H1 (cell line): ENCODE measurements at regions of chr10 and their contacts with region 1.

Region 1: GRCh38 chr10:86755740-86756510 is 494 bp upstream of the BMPR1A start:
- DNase-seq: peak; percentile 61 to 97
- H3K4me3 ChIP-seq: peak overlapping the region; percentile 84 to 96 (median 89)
- H3K27ac ChIP-seq: peak overlapping the region; percentile 88
- H3K4me1 ChIP-seq: peaks cover under 1 to 16% (median 8%) of the 10 kb centered on the region in 4 experiments
- H3K27me3 ChIP-seq: no peaks in the 10 kb centered on the region
- CTCF ChIP-seq: no peak
- EP300 ChIP-seq: no peak
- POLR2A ChIP-seq: peak in 1 of 2 experiments; percentile 87; a peak in 2 of 3 replicates
- RAD21 ChIP-seq: peak in 1 of 2 experiments; percentile 0; a peak in 1 of 4 replicates

Region 2: DNA sequence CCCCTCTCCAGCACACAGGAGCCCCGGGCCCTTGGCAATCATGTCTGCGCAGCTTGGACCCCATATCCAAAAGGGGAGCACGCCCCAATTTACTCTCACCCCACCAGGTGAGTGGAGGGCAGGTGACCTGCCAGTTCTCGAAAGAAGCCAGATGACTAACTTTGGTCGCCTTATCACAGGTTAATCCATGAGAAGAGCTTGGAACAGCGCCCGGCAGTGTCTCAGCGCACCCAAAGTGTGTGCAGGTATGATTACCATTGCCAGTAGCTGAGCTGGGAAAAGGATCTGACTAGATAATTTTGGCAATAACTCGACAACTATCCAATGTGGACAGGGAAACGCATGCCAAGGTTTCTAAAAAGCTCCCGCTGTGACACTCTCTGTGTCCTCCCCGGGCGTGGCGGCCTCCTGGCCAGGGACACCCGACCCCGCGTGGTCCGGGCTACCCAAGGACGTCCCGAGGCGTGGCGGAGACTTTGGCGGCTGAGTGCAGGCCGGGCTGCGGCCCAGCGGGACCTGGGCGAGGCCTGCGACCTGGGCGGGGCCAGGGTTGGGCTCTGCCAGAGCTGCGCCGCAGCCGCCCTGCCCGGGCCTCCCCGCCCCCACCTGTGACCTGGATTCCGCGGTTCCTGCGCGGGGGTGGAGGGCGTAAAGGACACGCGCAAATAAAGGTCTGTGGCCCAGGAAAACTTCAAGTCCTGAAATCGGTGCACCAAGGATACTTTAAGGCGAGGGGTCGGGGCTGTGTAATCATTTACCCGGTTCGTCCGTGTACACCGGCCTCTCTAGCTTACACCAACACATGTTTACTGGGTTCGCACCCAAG is 220.7 kb before region 1 on chr10:
- CTCF ChIA-PET with region 1: no interaction called
- POLR2A ChIA-PET with region 1: no interaction called
- DNase-seq: peak in 1 of 2 experiments; percentile 88
- H3K4me3 ChIP-seq: peak overlapping the region; percentile 78 to 86 (median 80)
- H3K27ac ChIP-seq: no peak overlapping the region
- H3K4me1 ChIP-seq: peaks cover 6 to 22% (median 15%) of the 10 kb centered on the region in 4 experiments
- H3K27me3 ChIP-seq: peaks cover 0 to 21% (median 10%) of the 10 kb centered on the region in 4 experiments; a peak in 5 of 7 replicates
- CTCF ChIP-seq: no peak
- EP300 ChIP-seq: no peak
- POLR2A ChIP-seq: no peak; a peak in 1 of 3 replicates
- RAD21 ChIP-seq: no peak

Region 3: GRCh38 chr10:86710987-86711512 is 44.9 kb before region 1 on chr10:
- CTCF ChIA-PET with region 1: interaction called, 7 read pairs
- POLR2A ChIA-PET with region 1: interaction called, 45 read pairs
- DNase-seq: peak; percentile 68 to 92
- H3K4me3 ChIP-seq: peak overlapping the region; percentile 46 to 67 (median 54)
- H3K27ac ChIP-seq: no peak overlapping the region; the same call in 1 of the 2 replicates
- H3K4me1 ChIP-seq: peaks cover 3 to 28% (median 12%) of the 10 kb centered on the region in 4 experiments
- H3K27me3 ChIP-seq: no peaks in the 10 kb centered on the region
- CTCF ChIP-seq: peak; percentile 68 to 97 (median 80)
- EP300 ChIP-seq: no peak
- POLR2A ChIP-seq: peak in 1 of 2 experiments; percentile 64; a peak in 2 of 3 replicates
- RAD21 ChIP-seq: peak; percentile 72 to 80

Region 4: GRCh38 chr10:86733260-86733671 is 22.7 kb before region 1 on chr10:
- CTCF ChIA-PET with region 1: interaction called, 3 read pairs
- POLR2A ChIA-PET with region 1: interaction called, 12 read pairs
- DNase-seq: no peak
- H3K4me3 ChIP-seq: no peak overlapping the region
- H3K27ac ChIP-seq: no peak overlapping the region
- H3K4me1 ChIP-seq: peaks cover 0 to 4% (median 0%) of the 10 kb centered on the region in 4 experiments; a peak in 2 of 7 replicates
- H3K27me3 ChIP-seq: no peaks in the 10 kb centered on the region
- CTCF ChIP-seq: no peak
- EP300 ChIP-seq: no peak
- POLR2A ChIP-seq: no peak
- RAD21 ChIP-seq: no peak

Region 5: GRCh38 chr10:86744067-86744725 is 11.7 kb before region 1 on chr10:
- CTCF ChIA-PET with region 1: interaction called, 3 read pairs
- POLR2A ChIA-PET with region 1: interaction called, 25 read pairs
- DNase-seq: no peak
- H3K4me3 ChIP-seq: no peak overlapping the region
- H3K27ac ChIP-seq: no peak overlapping the region
- H3K4me1 ChIP-seq: peaks cover 0 to 3% (median 0%) of the 10 kb centered on the region in 4 experiments; a peak in 1 of 7 replicates
- H3K27me3 ChIP-seq: no peaks in the 10 kb centered on the region
- CTCF ChIP-seq: no peak
- EP300 ChIP-seq: no peak
- POLR2A ChIP-seq: no peak
- RAD21 ChIP-seq: no peak

Region 6: DNA sequence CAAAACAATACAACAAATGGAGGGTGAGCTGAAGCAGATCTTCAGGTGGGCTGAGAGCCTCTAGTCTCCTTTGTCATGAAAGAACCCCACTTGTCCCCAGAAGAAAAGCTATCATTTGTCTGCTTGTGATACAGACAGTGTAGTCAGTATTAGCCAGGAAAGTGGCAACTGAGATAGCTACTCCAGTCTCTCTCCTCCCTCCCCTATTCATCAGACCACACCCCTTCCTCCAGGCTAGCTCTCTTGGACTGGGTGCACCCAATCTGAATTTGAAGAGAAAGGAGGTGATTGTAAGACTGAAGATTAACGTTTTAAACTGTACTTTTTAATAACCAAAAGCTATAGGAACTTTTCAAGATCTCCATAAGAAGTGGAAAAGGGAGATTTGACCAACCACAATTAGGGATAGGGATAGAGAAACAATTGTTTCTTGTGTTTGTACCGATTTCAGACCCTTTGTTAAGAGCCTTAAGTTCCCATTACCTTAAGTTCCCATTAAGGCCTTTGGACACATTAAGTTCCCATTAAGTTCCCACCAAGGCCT is 14.6 kb after region 1 on chr10:
- CTCF ChIA-PET with region 1: interaction called, 11 read pairs
- POLR2A ChIA-PET with region 1: interaction called, 54 read pairs
- DNase-seq: no peak
- H3K4me3 ChIP-seq: no peak overlapping the region
- H3K27ac ChIP-seq: no peak overlapping the region; the same call in 1 of the 2 replicates
- H3K4me1 ChIP-seq: peaks cover 9 to 32% (median 21%) of the 10 kb centered on the region in 4 experiments
- H3K27me3 ChIP-seq: no peaks in the 10 kb centered on the region
- CTCF ChIP-seq: no peak
- EP300 ChIP-seq: no peak
- POLR2A ChIP-seq: no peak
- RAD21 ChIP-seq: no peak